ENCODE measurements at regions of chr3 and their contacts with region 1.

Region 1: DNA sequence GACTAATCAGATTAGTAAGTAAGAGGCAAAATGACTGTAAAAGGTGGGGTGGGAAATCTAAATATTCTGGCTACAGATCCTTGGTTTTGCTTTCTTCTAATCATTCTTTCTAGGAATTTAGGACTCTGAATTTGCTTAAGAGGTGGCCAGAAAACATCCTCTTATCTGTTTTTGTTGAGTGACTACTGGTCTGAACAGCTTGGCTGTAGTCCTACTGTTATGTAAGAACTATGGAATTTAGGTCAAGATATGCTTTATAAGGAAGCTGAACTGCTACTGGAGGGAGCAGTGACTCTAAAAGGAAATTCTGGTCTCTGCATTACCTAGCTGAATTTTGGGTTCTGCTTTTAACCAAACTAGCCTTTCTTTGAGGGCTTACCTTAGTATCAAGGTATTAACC is 33.5 kb upstream of the CSPG5 start:
- DNase-seq: no peak
- H3K4me3 ChIP-seq: no peak overlapping the region
- H3K27ac ChIP-seq: peak overlapping the region; percentile 24 to 48 (median 34)
- H3K4me1 ChIP-seq: peaks cover 0 to 27% (median 8%) of the 10 kb centered on the region in 4 donors
- H3K27me3 ChIP-seq: no peaks in the 10 kb centered on the region
- CTCF ChIP-seq: no peak
- EP300 ChIP-seq: no peak
- POLR2A ChIP-seq: no peak

Region 2: GRCh38 chr3:47652142-47652541 is 40.0 kb after region 1 on chr3:
- in situ Hi-C with region 1: no loop called
- intact Hi-C with region 1: loop called (anchors 2 kb)
- DNase-seq: no peak
- H3K4me3 ChIP-seq: no peak overlapping the region
- H3K27ac ChIP-seq: no peak overlapping the region
- H3K4me1 ChIP-seq: peaks cover 0 to 6% (median 0%) of the 10 kb centered on the region in 4 donors
- H3K27me3 ChIP-seq: no peaks in the 10 kb centered on the region
- CTCF ChIP-seq: no peak
- EP300 ChIP-seq: no peak
- POLR2A ChIP-seq: no peak

Region 3: GRCh38 chr3:48215466-48215865 is 603.3 kb after region 1 on chr3:
- in situ Hi-C with region 1: no loop called
- intact Hi-C with region 1: no loop called
- DNase-seq: peak; percentile 14
- H3K4me3 ChIP-seq: no peak overlapping the region
- H3K27ac ChIP-seq: peak overlapping the region; percentile 30 to 67 (median 43)
- H3K4me1 ChIP-seq: peaks cover 0 to 19% (median 5%) of the 10 kb centered on the region in 4 donors
- H3K27me3 ChIP-seq: no peaks in the 10 kb centered on the region
- CTCF ChIP-seq: no peak
- EP300 ChIP-seq: no peak
- POLR2A ChIP-seq: no peak